A549 (cell line): ENCODE measurements at regions of chr3 and their contacts with region 1.

Region 1: GRCh38 chr3:8769088-8769822 is at the start of gene OXTR:
- DNase-seq: peak; percentile 66 to 78
- ATAC-seq: peak; percentile 93 to 99
- H3K4me3 ChIP-seq: peak within 1 kb of the TSS; percentile 52
- H3K27ac ChIP-seq: peak within 1 kb of the TSS; percentile 68 to 83
- H3K4me1 ChIP-seq: no peaks in the 10 kb centered on the region
- CTCF ChIP-seq: peak; percentile 98
- EP300 ChIP-seq: no peak
- POLR2A ChIP-seq: no peak
- RAD21 ChIP-seq: peak; percentile 90 to 98
- polyA plus RNA-seq, gene OXTR: 2.1 TPM in 2 replicates

Region 2: DNA sequence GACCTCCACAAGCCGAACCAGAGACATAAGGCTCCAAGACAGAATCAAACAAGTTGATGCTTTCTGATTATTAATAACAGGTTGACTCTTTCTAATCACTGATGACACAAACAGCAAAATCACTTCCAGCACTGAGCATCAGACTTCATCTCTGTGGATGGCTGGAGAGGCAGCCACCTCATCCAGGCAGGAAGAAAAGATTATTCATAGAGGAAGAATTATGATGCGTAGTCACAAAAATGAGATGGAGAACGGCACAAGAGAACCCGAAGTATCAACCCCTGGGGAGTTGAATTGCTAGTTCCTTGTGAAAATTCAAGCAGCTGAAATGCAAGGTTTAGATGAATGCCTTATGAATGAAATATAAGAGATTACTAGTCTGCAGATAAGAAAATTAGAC is 317.6 kb before region 1 on chr3:
- CTCF ChIA-PET with region 1: no interaction called
- POLR2A ChIA-PET with region 1: no interaction called
- DNase-seq: no peak
- ATAC-seq: no peak
- H3K4me3 ChIP-seq: no peak overlapping the region
- H3K27ac ChIP-seq: peak overlapping the region; percentile 43 to 75; a peak in 5 of 6 replicates
- H3K4me1 ChIP-seq: peaks cover 52% of the 10 kb centered on the region
- CTCF ChIP-seq: no peak
- EP300 ChIP-seq: no peak
- POLR2A ChIP-seq: no peak
- RAD21 ChIP-seq: no peak

Region 3: DNA sequence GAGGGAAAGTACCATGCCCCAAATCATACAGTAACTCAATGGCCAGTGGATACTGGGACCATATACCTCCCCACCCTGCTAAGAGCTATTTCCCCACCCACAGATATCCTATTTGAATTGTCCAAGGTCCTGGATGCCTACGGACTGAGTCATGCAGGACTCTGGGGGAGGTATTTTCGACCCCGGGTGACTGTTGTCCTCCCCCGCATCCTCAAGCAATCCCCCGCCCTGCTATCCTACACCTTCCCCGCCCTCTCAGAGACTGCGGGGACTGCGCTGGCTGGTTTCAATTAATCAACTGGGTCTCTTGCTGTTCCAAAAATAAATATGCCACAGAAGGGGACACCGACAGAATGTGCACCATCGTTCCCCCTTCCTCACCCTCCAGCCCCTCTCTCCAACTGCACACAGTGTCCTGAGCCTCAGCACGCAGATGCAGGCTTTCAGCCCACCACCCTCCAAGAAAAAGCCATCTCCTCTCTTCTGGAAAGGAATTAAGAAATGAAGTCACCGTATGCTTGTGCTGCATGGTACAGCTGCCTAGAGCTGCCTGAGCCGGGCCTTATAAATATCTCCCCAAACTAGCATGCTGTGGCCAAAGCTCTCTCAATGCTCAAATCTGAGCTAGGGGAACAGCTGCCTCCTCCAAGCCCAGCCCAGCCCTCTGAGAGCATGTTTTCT is 27.5 kb before region 1 on chr3:
- CTCF ChIA-PET with region 1: interaction called, 48 read pairs
- POLR2A ChIA-PET with region 1: interaction called, 3 read pairs
- DNase-seq: peak; percentile 84 to 86
- ATAC-seq: peak; percentile 59 to 85
- H3K4me3 ChIP-seq: peak overlapping the region; percentile 30; the same call in 2 of the 3 replicates
- H3K27ac ChIP-seq: peak overlapping the region; percentile 80 to 81
- H3K4me1 ChIP-seq: peaks cover 50% of the 10 kb centered on the region
- CTCF ChIP-seq: no peak
- EP300 ChIP-seq: peak; percentile 40 to 62; a peak in 2 of 5 replicates
- POLR2A ChIP-seq: no peak
- RAD21 ChIP-seq: peak; percentile 8 to 17; a peak in 2 of 5 replicates

Region 4: GRCh38 chr3:8810561-8810960 is 41.3 kb after region 1 on chr3:
- CTCF ChIA-PET with region 1: interaction called, 13 read pairs
- POLR2A ChIA-PET with region 1: no interaction called
- DNase-seq: no peak
- ATAC-seq: no peak
- H3K4me3 ChIP-seq: no peak overlapping the region
- H3K27ac ChIP-seq: no peak overlapping the region
- H3K4me1 ChIP-seq: no peaks in the 10 kb centered on the region
- CTCF ChIP-seq: no peak
- EP300 ChIP-seq: no peak
- POLR2A ChIP-seq: no peak
- RAD21 ChIP-seq: no peak

Region 5: GRCh38 chr3:8869613-8870012 is 100.4 kb after region 1 on chr3:
- CTCF ChIA-PET with region 1: interaction called, 56 read pairs
- POLR2A ChIA-PET with region 1: no interaction called
- DNase-seq: peak; percentile 83 to 93
- ATAC-seq: peak; percentile 99
- H3K4me3 ChIP-seq: no peak overlapping the region
- H3K27ac ChIP-seq: peak overlapping the region; percentile 84 to 93
- H3K4me1 ChIP-seq: peaks cover 42% of the 10 kb centered on the region
- CTCF ChIP-seq: no peak
- EP300 ChIP-seq: peak; percentile 31 to 63; a peak in 2 of 5 replicates
- POLR2A ChIP-seq: no peak
- RAD21 ChIP-seq: peak in 1 of 2 experiments; percentile 15; a peak in 2 of 5 replicates

Region 6: DNA sequence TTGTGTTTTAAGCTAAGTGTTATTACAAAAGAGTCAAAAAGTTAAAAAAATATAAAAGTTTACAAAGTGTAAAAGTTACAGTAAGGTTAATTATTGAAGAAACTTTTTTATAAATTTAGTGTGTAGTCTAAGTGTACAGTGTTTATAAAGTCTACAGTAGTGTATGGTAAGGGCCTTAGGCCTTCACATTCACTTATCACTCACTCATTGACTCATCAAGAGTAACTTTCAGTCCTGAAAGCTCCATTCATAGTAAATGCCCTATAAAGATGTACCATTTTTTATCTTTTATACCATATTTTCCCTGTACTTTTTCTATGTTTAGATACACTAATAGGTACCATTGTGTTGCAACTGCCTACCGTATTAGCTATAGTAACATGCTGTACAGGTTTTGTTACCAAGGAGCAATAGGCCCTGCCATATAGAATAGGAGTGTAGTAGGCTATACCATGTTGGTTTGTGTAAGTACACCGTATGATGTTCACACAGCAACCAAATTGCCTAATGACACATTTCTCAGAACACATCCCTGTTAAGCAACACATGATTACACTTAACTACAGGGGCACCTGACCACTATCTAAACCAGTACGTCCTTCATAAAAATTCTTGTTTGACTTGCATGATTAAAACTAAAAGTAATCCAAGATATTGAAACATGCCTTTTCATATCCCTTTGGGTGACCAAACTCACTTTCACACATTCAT is 176.8 kb after region 1 on chr3:
- CTCF ChIA-PET with region 1: interaction called, 31 read pairs
- POLR2A ChIA-PET with region 1: no interaction called
- DNase-seq: no peak
- ATAC-seq: no peak
- H3K4me3 ChIP-seq: no peak overlapping the region
- H3K27ac ChIP-seq: no peak overlapping the region
- H3K4me1 ChIP-seq: no peaks in the 10 kb centered on the region
- CTCF ChIP-seq: no peak
- EP300 ChIP-seq: no peak
- POLR2A ChIP-seq: no peak
- RAD21 ChIP-seq: no peak